GM18951 (cell line): ENCODE measurements at regions of chr11 and their contacts with region 1.

Region 1: GRCh38 chr11:17519061-17519885 is 24.9 kb downstream of the USH1C start:
- POLR2A ChIP-seq: no peak

Region 2: GRCh38 chr11:17391493-17392355 is 127.5 kb before region 1 on chr11:
- in situ Hi-C with region 1: loop called (anchors 10 kb)
- POLR2A ChIP-seq: no peak